GM13977 (cell line): ENCODE measurements at regions of chr16 and their contacts with region 1.

Region 1: DNA sequence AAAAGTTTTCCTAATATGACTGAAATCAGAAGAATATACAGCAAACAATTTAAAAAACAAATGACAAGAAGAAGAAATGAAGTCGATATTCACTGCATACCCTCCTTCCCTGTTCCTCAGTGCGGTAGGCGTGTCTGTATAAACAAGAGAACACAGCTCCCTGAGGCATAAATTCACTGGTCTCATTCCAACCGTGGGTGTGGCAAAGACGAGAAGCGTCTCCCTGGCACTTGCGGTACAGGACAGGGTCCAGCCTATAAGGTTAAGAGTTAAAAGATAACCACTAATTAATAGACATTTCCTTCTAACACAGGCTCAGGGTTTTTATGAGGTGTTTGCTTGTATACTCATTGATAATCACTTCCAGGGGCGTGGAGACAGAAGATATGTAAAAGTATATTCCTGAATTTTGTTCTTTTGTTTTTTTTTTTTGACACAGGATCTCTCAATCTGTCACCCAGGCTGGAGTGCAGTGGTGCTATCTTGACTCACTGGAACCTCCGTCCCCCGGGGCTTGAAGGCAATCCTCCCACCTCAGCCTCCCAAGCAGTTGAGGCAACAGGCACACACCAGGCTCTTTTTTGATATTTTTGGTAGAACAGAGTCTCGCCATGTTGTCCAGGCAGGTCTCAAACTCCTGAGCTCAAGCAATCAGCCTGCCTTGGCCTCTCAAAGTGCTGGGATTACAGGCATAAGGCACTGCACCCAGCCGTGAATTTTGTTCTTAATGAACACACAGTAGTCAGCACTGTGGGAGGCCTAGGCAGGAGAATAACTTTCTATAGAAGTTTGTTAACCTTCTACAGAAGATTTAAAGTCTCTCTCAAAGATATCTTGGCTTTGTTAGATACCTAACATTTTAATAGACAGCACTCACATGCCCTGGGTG is 59.1 kb upstream of the CLEC18B start:
- DNase-seq: no peak
- CTCF ChIP-seq: no peak

Region 2: GRCh38 chr16:74320707-74321106 is 159.7 kb before region 1 on chr16:
- in situ Hi-C with region 1: no loop called
- DNase-seq: no peak
- CTCF ChIP-seq: no peak

Region 3: DNA sequence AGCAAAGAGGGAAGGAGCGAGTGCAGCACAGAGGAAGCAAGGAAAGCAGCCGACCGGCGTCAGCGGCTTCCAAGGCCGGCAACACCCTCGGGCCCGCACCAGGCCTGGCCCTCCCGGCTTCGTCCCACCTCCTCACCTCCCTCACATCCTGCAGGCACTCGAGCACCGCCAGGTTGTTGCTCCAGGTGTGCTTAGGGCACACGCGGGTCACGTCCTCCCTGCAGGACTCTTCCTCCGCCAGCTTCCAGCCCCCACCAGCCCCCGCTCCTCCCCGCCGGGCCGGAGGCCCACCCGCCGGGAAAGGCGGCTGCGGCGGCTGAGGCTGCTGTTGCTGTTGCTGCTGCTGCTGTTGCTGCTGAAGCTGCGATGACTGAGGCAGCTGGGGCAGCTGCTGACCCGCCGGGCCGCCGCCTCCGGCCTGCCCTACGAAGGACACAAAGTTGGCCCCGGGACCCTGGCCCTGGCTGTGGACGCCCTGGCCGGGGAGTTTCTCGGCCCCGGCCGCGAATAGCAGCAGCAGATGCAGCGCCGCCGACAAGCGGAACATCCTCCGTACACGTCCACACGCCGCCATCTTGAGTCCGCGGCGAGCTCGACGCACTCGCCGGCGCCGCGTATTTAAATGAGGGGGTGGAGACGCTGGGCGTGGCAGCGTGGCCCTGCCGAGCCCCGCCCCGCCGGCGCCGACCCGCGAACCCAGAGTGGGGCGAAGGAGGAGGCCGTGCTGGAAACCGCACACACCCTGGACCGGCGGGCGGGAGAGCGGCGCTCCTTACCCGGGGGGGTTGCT is 126.3 kb after region 1 on chr16 and contains the start of gene GLG1:
- in situ Hi-C with region 1: loop called (anchors 25 kb)
- DNase-seq: peak; percentile 91
- CTCF ChIP-seq: peak; percentile 21